ENCODE measurements at regions of chr5 and their contacts with region 1.

Region 1: GRCh38 chr5:154072414-154073171 is 33.8 kb downstream of the MFAP3 start:
- DNase-seq: peak; percentile 91
- ATAC-seq: peak; percentile 91
- H3K4me3 Mint-ChIP-seq: peak overlapping the region; percentile 35
- H3K27ac Mint-ChIP-seq: peak overlapping the region; percentile 63
- H3K4me1 Mint-ChIP-seq: peaks cover 18% of the 10 kb centered on the region
- H3K27me3 Mint-ChIP-seq: peaks cover 5% of the 10 kb centered on the region
- CTCF ChIP-seq: peak; percentile 86

Region 2: DNA sequence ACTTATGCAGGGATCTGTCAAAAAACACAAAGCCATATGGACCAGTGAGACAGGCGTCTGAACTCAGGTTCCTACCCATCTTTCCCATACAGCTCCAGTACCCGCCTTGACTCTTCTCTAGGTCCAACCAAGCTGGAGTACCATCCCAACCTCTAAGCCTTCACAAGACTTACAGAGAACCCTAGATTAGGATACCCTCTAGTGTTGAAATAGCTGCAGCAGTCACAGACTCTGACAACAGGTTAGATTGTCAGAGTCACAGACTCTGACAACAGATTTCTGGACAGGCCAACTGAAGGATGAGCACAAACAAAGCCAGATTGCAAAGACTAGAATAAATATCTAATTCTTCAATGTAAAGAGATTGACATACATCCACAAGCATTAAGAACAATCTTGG is 316.1 kb before region 1 on chr5:
- CTCF ChIA-PET with region 1: no interaction called
- POLR2A ChIA-PET with region 1: no interaction called
- intact Hi-C with region 1: no loop called
- DNase-seq: no peak
- ATAC-seq: no peak
- H3K4me3 Mint-ChIP-seq: no peak overlapping the region
- H3K27ac Mint-ChIP-seq: no peak overlapping the region
- H3K4me1 Mint-ChIP-seq: no peaks in the 10 kb centered on the region
- H3K27me3 Mint-ChIP-seq: no peaks in the 10 kb centered on the region
- CTCF ChIP-seq: no peak

Region 3: DNA sequence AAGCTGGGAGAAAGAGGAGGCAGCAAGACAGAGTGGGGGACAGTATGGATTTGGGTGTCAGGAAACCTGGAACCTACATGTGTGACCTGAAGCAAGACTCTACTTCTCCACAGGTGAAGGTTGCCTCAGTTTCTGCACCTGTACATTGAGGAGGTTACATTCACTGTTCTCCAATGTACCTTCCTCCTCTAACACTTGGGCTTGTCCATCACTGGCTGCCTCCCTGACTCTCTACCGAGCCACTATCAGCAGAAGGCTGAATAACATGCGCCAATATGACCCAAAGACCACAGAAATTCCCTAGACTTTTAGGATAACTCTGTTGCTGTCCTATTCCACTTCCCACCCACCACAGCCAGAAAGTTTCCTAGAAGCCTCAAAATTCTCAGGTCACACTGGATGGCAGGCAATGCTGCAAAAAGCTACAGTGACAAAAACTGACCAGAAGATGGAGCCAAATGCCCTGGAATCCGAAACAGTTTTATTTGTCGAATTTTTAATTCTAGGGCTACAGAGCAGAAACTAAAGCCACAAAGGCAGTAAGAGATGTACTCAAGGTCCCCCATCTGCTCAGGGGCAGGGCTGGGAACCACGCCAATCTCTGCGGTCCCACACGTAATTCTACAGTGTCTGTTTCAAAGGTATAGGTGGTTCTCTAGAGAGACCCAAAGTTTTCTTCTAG is 98.3 kb before region 1 on chr5:
- CTCF ChIA-PET with region 1: interaction called, 11 read pairs
- POLR2A ChIA-PET with region 1: no interaction called
- intact Hi-C with region 1: no loop called
- DNase-seq: peak; percentile 39
- ATAC-seq: peak; percentile 62
- H3K4me3 Mint-ChIP-seq: no peak overlapping the region
- H3K27ac Mint-ChIP-seq: no peak overlapping the region
- H3K4me1 Mint-ChIP-seq: no peaks in the 10 kb centered on the region
- H3K27me3 Mint-ChIP-seq: peaks cover 4% of the 10 kb centered on the region
- CTCF ChIP-seq: peak; percentile 76

Region 4: DNA sequence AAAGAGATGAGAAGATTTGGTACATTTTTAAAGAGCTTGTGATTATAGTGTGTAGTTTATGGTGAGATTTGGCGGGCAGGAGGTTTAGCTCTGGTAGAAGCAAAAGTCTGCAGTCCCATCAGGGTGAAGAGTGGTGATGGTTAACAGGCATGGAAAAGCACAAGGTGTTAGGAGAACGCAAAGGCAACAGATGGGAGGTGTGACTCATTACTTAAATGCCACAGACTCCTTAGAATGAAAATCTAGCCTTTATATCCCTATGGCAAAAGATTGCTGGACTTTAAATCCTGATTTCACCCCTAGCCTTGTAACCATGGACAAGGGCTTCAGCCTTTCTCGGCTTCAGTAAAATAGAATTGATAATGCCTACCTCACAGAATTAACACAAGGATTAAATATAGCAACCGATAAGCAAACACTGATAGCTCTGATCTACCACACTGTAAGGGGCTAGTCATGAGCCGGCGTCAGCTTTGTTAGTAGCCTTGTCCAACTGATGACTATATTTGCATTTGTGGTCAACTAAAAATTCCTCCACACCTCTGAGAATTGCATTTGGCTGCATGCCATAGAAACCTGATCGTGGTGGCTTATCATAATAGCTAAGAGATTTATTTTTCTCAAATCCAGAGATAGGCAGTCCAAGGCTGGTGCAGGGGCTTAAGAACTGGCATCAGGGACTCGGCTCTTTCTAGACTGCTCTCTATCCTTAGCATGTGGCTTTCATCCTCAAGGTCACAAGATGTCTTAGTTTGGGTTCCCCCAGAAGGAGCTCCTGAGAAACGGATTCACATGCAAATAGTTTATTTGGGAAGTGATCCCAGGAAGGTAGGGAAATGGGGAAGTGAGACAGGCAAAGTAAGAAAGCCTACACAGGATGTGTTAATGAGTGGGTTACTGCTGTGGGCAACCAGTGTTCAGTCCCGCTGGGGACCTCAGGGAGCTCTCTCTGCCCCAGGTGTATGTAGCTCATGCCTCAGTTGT is 14.2 kb before region 1 on chr5:
- CTCF ChIA-PET with region 1: interaction called, 38 read pairs
- POLR2A ChIA-PET with region 1: interaction called, 8 read pairs
- intact Hi-C with region 1: no loop called
- DNase-seq: peak; percentile 13
- ATAC-seq: peak; percentile 34
- H3K4me3 Mint-ChIP-seq: no peak overlapping the region
- H3K27ac Mint-ChIP-seq: peak overlapping the region; percentile 1
- H3K4me1 Mint-ChIP-seq: peaks cover 30% of the 10 kb centered on the region
- H3K27me3 Mint-ChIP-seq: no peaks in the 10 kb centered on the region
- CTCF ChIP-seq: no peak

Region 5: GRCh38 chr5:154157483-154158378 is 85.1 kb after region 1 on chr5:
- CTCF ChIA-PET with region 1: interaction called, 21 read pairs
- POLR2A ChIA-PET with region 1: interaction called, 3 read pairs
- intact Hi-C with region 1: no loop called
- DNase-seq: peak; percentile 20
- ATAC-seq: no peak
- H3K4me3 Mint-ChIP-seq: no peak overlapping the region
- H3K27ac Mint-ChIP-seq: no peak overlapping the region
- H3K4me1 Mint-ChIP-seq: no peaks in the 10 kb centered on the region
- H3K27me3 Mint-ChIP-seq: peaks cover 22% of the 10 kb centered on the region
- CTCF ChIP-seq: peak; percentile 44

Region 6: DNA sequence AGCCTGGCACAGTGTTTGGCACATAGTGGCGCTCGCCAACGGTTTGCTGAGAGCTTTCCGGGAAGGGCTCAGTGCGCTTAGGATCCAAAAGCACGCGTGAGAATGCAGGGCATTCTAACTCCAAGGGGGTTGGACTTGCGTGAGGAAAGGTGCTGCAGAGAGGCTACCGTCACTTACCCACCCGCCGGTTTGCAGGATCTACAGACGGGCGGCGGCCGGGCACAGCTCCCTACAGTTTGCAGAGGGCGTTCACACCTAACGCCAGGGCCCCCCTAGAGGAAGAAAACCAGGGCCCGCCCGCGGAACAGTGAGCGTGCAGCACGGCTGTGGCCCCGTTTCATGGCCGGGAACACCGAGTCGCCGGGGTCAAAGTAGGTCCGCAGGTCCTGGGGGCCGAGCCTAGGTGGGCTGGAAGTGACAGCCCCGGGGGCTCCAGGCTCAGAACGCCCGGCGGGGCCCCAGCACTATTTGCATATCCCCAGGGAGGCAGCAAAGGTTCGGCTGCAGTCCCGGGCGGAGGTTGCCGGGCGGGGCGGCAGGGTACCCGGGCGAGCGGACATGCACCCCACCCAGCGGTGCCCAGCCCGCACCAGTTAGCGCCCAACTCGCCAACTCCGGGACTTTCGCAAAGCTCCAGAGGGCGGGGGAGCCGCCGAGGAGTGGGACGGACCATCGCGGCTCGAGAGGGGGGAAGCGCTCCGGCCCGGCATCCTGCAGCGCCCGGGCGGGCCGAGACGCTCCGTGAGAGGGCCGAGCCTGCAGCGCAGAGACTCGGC is 117.4 kb after region 1 on chr5:
- CTCF ChIA-PET with region 1: interaction called, 161 read pairs
- POLR2A ChIA-PET with region 1: interaction called, 9 read pairs
- intact Hi-C with region 1: no loop called
- DNase-seq: peak; percentile 78
- ATAC-seq: peak; percentile 85
- H3K4me3 Mint-ChIP-seq: peak overlapping the region; percentile 75
- H3K27ac Mint-ChIP-seq: peak overlapping the region; percentile 43
- H3K4me1 Mint-ChIP-seq: peaks cover 28% of the 10 kb centered on the region
- H3K27me3 Mint-ChIP-seq: peaks cover 7% of the 10 kb centered on the region
- CTCF ChIP-seq: peak; percentile 66

Region 7: DNA sequence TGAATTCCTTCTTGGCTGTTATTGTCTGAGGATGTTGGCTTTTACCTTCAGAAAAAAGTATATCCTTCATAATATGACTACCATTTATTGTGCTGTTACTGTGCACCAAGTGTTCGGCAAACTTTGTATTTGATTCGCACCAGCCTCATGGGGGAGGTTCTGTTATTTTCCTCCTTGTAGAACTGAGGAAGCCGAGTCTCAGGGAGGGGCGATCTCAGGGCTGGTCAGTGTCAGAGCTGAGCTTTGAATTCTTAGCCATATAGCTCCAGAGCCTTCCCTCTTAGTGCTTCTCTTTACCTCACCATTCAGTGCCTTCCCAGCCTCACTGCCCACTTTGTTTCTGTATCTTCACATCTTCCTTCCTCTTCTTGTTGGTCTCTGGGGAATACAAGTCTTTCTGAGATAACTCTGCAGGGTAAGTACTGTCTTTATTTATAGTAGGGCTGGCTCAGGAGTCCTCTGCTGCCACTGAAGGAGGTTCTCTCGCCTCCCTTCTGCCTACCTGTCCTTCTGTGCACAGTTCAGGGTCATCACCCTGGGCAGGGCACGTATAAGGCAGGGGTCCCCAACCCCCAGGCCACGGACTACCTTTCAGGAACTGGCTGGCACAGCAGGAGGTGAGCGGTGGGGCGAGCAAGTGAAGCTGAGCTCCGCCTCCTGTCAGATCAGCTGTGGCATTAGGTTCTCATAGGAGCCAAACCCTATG is 166.3 kb after region 1 on chr5:
- CTCF ChIA-PET with region 1: interaction called, 16 read pairs
- POLR2A ChIA-PET with region 1: no interaction called
- intact Hi-C with region 1: no loop called
- DNase-seq: no peak
- ATAC-seq: no peak
- H3K4me3 Mint-ChIP-seq: no peak overlapping the region
- H3K27ac Mint-ChIP-seq: no peak overlapping the region
- H3K4me1 Mint-ChIP-seq: peaks cover 35% of the 10 kb centered on the region
- H3K27me3 Mint-ChIP-seq: no peaks in the 10 kb centered on the region
- CTCF ChIP-seq: no peak

Measured in activated CD8-positive, alpha-beta T cell treated with anti-CD3 and anti-CD28 coated beads for 36 hours (primary cell).